Activated B cell treated with CpG ODN at 0.5 μM for 24 hours (primary cell): ENCODE measurements at regions of chr18 and their contacts with region 1.

Region 1: DNA sequence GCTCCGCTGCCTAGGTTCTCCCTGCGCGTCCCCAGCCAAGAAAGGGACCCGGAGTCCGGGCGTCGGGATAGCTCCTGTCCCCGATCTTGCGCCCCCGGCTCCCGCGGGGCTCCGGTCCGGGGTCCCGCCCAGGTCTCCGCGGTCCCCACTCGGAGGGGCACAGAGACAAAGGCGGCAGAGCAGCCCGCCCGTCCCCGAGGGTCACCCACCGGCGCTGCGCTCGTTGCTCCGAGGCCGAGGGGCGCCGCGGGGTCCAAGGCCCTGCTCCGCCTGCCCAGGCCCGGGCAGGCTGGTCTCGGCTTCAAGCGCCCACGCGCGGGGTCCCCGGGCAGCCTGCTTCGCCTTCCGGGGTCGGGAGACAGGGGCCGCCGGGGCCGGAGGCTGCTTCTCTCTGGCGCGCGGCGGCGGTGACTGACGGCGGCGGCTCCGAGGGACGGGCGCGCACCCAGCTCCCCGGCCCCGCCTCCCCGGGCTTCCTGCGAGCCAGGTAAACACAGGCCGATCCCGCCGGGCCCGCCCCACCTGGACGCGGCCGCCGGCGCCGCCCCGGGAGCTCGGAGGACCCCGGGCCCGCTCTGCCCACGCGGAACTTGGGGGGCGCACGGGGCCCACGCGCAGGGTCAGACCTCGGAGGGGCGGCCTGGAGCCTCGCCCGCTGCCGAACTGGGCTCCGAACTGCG is at the start of gene MBP:
- DNase-seq: peak; percentile 72
- ATAC-seq: peak; percentile 42
- H3K4me3 Mint-ChIP-seq: peak within 1 kb of the TSS; percentile 95
- H3K27ac Mint-ChIP-seq: peak within 1 kb of the TSS; percentile 91
- H3K4me1 Mint-ChIP-seq: peaks cover 56% of the 10 kb centered on the region
- H3K27me3 Mint-ChIP-seq: no peaks in the 10 kb centered on the region
- CTCF ChIP-seq: no peak
- total RNA-seq, gene MBP: 88.0 and 92.7 TPM in 2 replicates

Region 2: GRCh38 chr18:77054606-77055428 is 77.7 kb before region 1 on chr18:
- CTCF ChIA-PET with region 1: interaction called, 4 read pairs
- POLR2A ChIA-PET with region 1: interaction called, 71 read pairs
- intact Hi-C with region 1: loop called (anchors 2 kb)
- DNase-seq: peak; percentile 57
- ATAC-seq: peak; percentile 65
- H3K4me3 Mint-ChIP-seq: peak overlapping the region; percentile 67
- H3K27ac Mint-ChIP-seq: peak overlapping the region; percentile 91
- H3K4me1 Mint-ChIP-seq: peaks cover 65% of the 10 kb centered on the region
- H3K27me3 Mint-ChIP-seq: no peaks in the 10 kb centered on the region
- CTCF ChIP-seq: no peak

Region 3: GRCh38 chr18:77079954-77080682 is 52.4 kb before region 1 on chr18:
- CTCF ChIA-PET with region 1: no interaction called
- POLR2A ChIA-PET with region 1: interaction called, 17 read pairs
- intact Hi-C with region 1: no loop called
- DNase-seq: peak; percentile 60
- ATAC-seq: peak; percentile 99
- H3K4me3 Mint-ChIP-seq: peak overlapping the region; percentile 45
- H3K27ac Mint-ChIP-seq: peak overlapping the region; percentile 84
- H3K4me1 Mint-ChIP-seq: peaks cover 52% of the 10 kb centered on the region
- H3K27me3 Mint-ChIP-seq: no peaks in the 10 kb centered on the region
- CTCF ChIP-seq: no peak

Region 4: GRCh38 chr18:77108001-77108692 is 24.4 kb before region 1 on chr18:
- CTCF ChIA-PET with region 1: interaction called, 4 read pairs
- POLR2A ChIA-PET with region 1: interaction called, 28 read pairs
- intact Hi-C with region 1: loop called (anchors 1 kb)
- DNase-seq: no peak
- ATAC-seq: peak; percentile 59
- H3K4me3 Mint-ChIP-seq: peak overlapping the region; percentile 29
- H3K27ac Mint-ChIP-seq: peak overlapping the region; percentile 77
- H3K4me1 Mint-ChIP-seq: peaks cover 70% of the 10 kb centered on the region
- H3K27me3 Mint-ChIP-seq: no peaks in the 10 kb centered on the region
- CTCF ChIP-seq: no peak

Region 5: DNA sequence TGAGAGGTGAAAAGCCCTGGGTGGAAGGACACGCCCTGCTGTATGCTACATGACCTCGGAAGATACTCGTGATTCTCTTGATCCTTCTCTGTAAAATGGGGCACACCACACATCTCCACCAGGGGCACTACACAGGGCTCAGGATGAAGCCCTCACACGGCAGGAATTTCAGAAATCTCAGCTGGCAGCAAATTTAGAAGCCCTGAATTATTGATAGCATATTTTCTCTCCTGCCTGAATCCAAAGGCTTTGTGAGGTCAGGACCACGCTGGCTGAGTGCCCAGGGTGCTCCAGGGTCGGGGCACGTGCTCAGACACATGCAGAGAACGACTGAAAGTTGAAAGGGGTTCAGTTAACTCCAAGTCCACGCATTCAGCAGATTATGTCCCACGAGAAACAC is 75.0 kb after region 1 on chr18:
- CTCF ChIA-PET with region 1: interaction called, 10 read pairs
- POLR2A ChIA-PET with region 1: interaction called, 11 read pairs
- intact Hi-C with region 1: loop called (anchors 1 kb)
- DNase-seq: no peak
- ATAC-seq: peak; percentile 87
- H3K4me3 Mint-ChIP-seq: peak overlapping the region; percentile 64
- H3K27ac Mint-ChIP-seq: peak overlapping the region; percentile 74
- H3K4me1 Mint-ChIP-seq: peaks cover 25% of the 10 kb centered on the region
- H3K27me3 Mint-ChIP-seq: peaks cover 2% of the 10 kb centered on the region
- CTCF ChIP-seq: no peak